ENCODE measurements at regions of chr18 and their contacts with region 1.

Region 1: GRCh38 chr18:3129053-3129864 is 90.5 kb downstream of the MYOM1 start:
- DNase-seq: peak; percentile 71 to 78 (median 76)
- H3K4me3 ChIP-seq: no peak overlapping the region
- H3K4me3 Mint-ChIP-seq: peak overlapping the region in 2 of 8 donors; percentile 35 to 57
- H3K27ac ChIP-seq: no peak overlapping the region
- H3K27ac Mint-ChIP-seq: peak overlapping the region in 5 of 7 donors; percentile 0 to 64 (median 32)
- H3K4me1 ChIP-seq: peaks cover 7% of the 10 kb centered on the region
- H3K4me1 Mint-ChIP-seq: peaks cover 4 to 11% (median 9%) of the 10 kb centered on the region in 4 donors
- H3K27me3 ChIP-seq: no peaks in the 10 kb centered on the region
- H3K27me3 Mint-ChIP-seq: no peaks in the 10 kb centered on the region

Region 2: DNA sequence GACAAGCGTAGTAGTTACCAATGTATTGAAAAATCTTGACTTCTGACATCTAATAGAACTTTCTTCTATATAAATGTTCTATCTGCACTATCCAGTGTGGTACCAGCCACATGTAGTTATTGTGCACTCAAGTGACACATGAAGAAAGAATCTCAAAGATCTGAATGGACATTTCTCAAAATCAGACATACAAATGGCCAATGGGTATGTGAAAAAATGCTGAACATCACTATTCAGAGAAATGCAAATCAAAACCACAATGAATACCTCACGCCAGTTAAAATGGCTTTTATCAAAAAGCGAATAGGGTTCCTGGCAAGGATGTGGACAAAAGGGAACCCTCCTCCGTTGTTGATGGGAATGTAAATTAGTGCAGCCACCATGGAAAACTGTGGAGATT is 511.2 kb before region 1 on chr18:
- CTCF ChIA-PET with region 1: no interaction called
- POLR2A ChIA-PET with region 1: no interaction called
- intact Hi-C with region 1: no loop called
- DNase-seq: no peak
- H3K4me3 ChIP-seq: no peak overlapping the region
- H3K4me3 Mint-ChIP-seq: no peak overlapping the region
- H3K27ac ChIP-seq: no peak overlapping the region
- H3K27ac Mint-ChIP-seq: no peak overlapping the region
- H3K4me1 ChIP-seq: no peaks in the 10 kb centered on the region
- H3K4me1 Mint-ChIP-seq: peaks cover 0 to 4% (median under 1%) of the 10 kb centered on the region in 4 donors
- H3K27me3 ChIP-seq: no peaks in the 10 kb centered on the region
- H3K27me3 Mint-ChIP-seq: no peaks in the 10 kb centered on the region

Region 3: DNA sequence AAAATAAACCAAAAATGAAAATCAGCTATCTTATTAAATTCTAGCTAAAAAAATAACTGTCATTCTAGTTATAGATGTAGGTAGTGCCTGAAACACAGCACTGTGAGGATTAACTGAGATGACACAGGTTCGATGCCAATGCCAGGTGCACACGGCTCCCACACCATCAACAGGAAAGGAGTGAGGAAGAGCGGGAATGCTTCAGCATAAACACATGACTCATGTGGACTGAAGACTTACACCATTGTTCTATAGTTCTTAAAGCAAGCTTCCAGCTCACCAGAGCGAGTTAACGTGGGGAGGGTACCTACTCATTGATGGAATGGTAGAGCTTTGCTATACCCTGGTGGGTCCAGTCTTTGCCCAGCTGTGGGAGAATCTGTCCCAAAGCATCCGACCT is 205.8 kb before region 1 on chr18:
- CTCF ChIA-PET with region 1: interaction called, 14 read pairs
- POLR2A ChIA-PET with region 1: no interaction called
- intact Hi-C with region 1: no loop called
- DNase-seq: no peak
- H3K4me3 ChIP-seq: no peak overlapping the region
- H3K4me3 Mint-ChIP-seq: no peak overlapping the region
- H3K27ac ChIP-seq: no peak overlapping the region
- H3K27ac Mint-ChIP-seq: peak overlapping the region in 1 of 7 donors; percentile 51
- H3K4me1 ChIP-seq: no peaks in the 10 kb centered on the region
- H3K4me1 Mint-ChIP-seq: peaks cover 0 to 2% (median 0%) of the 10 kb centered on the region in 4 donors
- H3K27me3 ChIP-seq: no peaks in the 10 kb centered on the region
- H3K27me3 Mint-ChIP-seq: no peaks in the 10 kb centered on the region

Region 4: GRCh38 chr18:2985628-2986027 is 143.6 kb before region 1 on chr18:
- CTCF ChIA-PET with region 1: interaction called, 31 read pairs
- POLR2A ChIA-PET with region 1: no interaction called
- intact Hi-C with region 1: no loop called
- DNase-seq: peak; percentile 47 to 71 (median 69)
- H3K4me3 ChIP-seq: no peak overlapping the region
- H3K4me3 Mint-ChIP-seq: peak overlapping the region in 1 of 8 donors; percentile 44
- H3K27ac ChIP-seq: no peak overlapping the region
- H3K27ac Mint-ChIP-seq: peak overlapping the region in 4 of 7 donors; percentile 15 to 90 (median 39)
- H3K4me1 ChIP-seq: peaks cover 51% of the 10 kb centered on the region
- H3K4me1 Mint-ChIP-seq: peaks cover 34 to 78% (median 50%) of the 10 kb centered on the region in 4 donors
- H3K27me3 ChIP-seq: no peaks in the 10 kb centered on the region
- H3K27me3 Mint-ChIP-seq: no peaks in the 10 kb centered on the region

Region 5: GRCh38 chr18:3002732-3003131 is 126.5 kb before region 1 on chr18:
- CTCF ChIA-PET with region 1: interaction called, 291 read pairs
- POLR2A ChIA-PET with region 1: no interaction called
- intact Hi-C with region 1: no loop called
- DNase-seq: no peak
- H3K4me3 ChIP-seq: no peak overlapping the region
- H3K4me3 Mint-ChIP-seq: peak overlapping the region in 3 of 8 donors; percentile 7 to 26 (median 13)
- H3K27ac ChIP-seq: no peak overlapping the region
- H3K27ac Mint-ChIP-seq: peak overlapping the region; percentile 26 to 88 (median 62)
- H3K4me1 ChIP-seq: peaks cover 46% of the 10 kb centered on the region
- H3K4me1 Mint-ChIP-seq: peaks cover 47 to 89% (median 65%) of the 10 kb centered on the region in 4 donors
- H3K27me3 ChIP-seq: no peaks in the 10 kb centered on the region
- H3K27me3 Mint-ChIP-seq: no peaks in the 10 kb centered on the region

Region 6: DNA sequence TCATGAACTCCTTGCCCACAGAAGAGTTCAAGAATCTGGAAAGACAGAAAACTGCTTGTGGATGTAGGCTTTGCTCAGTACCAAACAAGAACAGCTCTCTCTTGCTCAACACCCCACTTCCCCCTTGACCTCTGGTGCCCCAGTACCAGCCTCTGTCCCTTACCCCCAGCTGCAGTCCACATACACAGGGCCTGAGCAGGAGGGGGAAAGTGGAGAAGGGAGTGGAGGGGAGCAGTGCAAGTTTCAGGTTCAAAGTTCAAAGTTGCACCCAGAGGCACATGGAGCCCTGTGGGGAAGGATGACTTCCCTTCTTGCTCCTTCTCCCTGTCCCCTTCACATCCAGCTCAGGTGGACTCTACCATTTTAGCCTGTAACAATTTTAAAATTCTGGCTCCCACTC is 55.2 kb before region 1 on chr18:
- CTCF ChIA-PET with region 1: interaction called, 22 read pairs
- POLR2A ChIA-PET with region 1: no interaction called
- intact Hi-C with region 1: no loop called
- DNase-seq: no peak
- H3K4me3 ChIP-seq: no peak overlapping the region
- H3K4me3 Mint-ChIP-seq: no peak overlapping the region
- H3K27ac ChIP-seq: no peak overlapping the region
- H3K27ac Mint-ChIP-seq: peak overlapping the region in 1 of 7 donors; percentile 22
- H3K4me1 ChIP-seq: peaks cover 9% of the 10 kb centered on the region
- H3K4me1 Mint-ChIP-seq: peaks cover 7 to 11% (median 9%) of the 10 kb centered on the region in 4 donors
- H3K27me3 ChIP-seq: no peaks in the 10 kb centered on the region
- H3K27me3 Mint-ChIP-seq: no peaks in the 10 kb centered on the region

Region 7: GRCh38 chr18:3097082-3097481 is 32.2 kb before region 1 on chr18:
- CTCF ChIA-PET with region 1: interaction called, 22 read pairs
- POLR2A ChIA-PET with region 1: interaction called, 4 read pairs
- intact Hi-C with region 1: no loop called
- DNase-seq: peak; percentile 57 to 78 (median 63)
- H3K4me3 ChIP-seq: no peak overlapping the region
- H3K4me3 Mint-ChIP-seq: peak overlapping the region in 6 of 8 donors; percentile 1 to 47 (median 23)
- H3K27ac ChIP-seq: no peak overlapping the region
- H3K27ac Mint-ChIP-seq: peak overlapping the region in 6 of 7 donors; percentile 18 to 86 (median 67)
- H3K4me1 ChIP-seq: peaks cover 18% of the 10 kb centered on the region
- H3K4me1 Mint-ChIP-seq: peaks cover 12 to 22% (median 18%) of the 10 kb centered on the region in 4 donors
- H3K27me3 ChIP-seq: no peaks in the 10 kb centered on the region
- H3K27me3 Mint-ChIP-seq: no peaks in the 10 kb centered on the region

Region 8: DNA sequence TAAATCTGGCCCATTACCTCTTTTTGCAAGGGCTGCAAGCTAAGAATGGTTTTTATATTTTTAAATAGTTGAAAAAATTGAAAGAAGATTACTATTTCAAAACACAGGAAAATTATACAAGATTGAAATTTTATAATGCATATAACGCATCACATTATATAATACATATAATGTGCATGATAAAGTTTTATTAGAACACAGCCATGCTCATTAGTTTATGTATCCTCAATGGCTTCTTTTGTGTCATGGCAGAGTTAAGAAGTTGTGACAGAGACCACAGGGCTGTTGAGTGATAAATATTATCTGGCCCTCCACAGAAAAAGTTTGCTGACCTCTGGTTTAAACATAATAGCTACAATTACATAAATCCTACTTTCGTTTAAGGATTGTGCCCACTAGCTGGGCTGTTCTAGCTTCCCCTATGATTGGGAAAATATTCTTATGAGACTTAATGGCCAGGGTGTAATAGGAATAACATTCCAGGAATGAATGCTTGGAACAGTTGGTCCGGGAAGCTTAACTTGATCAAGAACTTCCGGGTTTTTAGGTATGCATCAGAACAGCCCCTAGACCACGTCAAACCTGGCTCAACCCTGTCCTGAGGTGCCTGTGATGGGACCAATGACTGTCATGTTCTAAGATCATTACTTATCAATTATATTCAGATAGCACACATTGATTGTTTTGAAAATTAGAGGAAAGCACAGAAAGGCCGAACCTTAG is 17.6 kb before region 1 on chr18:
- CTCF ChIA-PET with region 1: interaction called, 61 read pairs
- POLR2A ChIA-PET with region 1: no interaction called
- intact Hi-C with region 1: no loop called
- DNase-seq: no peak
- H3K4me3 ChIP-seq: no peak overlapping the region
- H3K4me3 Mint-ChIP-seq: no peak overlapping the region
- H3K27ac ChIP-seq: no peak overlapping the region
- H3K27ac Mint-ChIP-seq: no peak overlapping the region
- H3K4me1 ChIP-seq: no peaks in the 10 kb centered on the region
- H3K4me1 Mint-ChIP-seq: no peaks in the 10 kb centered on the region
- H3K27me3 ChIP-seq: no peaks in the 10 kb centered on the region
- H3K27me3 Mint-ChIP-seq: no peaks in the 10 kb centered on the region

Region 9: DNA sequence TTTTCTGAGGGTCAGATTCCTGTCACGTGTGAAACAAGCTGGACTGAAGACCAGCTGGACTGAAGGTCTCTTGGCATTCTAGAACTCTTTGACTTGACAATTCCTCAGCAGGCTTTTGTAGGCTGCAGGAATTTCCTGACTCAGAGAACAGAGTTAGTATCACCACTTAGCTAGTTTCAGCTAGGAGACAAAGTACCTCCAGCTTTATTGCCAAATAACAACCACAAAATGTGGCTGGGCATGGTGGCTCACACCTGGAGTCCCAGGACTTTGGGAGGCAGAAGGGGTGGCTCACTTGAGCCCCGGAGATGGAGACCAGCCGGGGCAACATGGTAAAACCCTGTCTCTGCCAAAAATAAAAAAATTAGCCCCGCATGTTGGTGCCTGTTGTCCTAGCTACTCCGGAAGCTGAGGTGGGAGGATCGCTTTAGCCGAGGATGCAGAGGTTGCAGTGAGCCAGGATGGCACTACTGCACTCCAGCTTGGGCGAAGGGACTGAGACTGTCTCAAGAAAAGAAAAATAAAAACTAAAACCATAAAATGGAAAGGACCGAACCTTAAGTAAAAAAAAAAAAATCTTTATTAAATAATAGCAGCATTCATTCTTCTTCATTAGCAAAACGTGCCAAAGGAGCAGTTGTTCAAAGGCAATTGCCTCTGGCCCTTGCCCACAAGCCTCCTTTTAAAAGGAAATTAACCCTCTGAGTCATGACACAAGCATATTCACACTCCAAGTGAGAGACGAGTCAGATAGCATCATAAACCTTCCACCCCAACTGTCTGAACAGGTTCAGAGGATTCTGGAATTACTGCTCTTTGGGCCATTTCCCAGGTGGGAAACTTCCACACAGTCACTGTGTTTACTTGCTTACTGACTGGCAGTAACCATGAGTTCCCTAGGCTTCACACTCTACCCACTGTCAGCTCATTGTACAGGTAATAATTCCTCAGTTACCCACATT is 221.6 kb after region 1 on chr18:
- CTCF ChIA-PET with region 1: no interaction called
- POLR2A ChIA-PET with region 1: no interaction called
- intact Hi-C with region 1: no loop called
- DNase-seq: no peak
- H3K4me3 ChIP-seq: no peak overlapping the region
- H3K4me3 Mint-ChIP-seq: no peak overlapping the region
- H3K27ac ChIP-seq: no peak overlapping the region
- H3K27ac Mint-ChIP-seq: no peak overlapping the region
- H3K4me1 ChIP-seq: peaks cover 1% of the 10 kb centered on the region
- H3K4me1 Mint-ChIP-seq: peaks cover 0 to 3% (median 2%) of the 10 kb centered on the region in 4 donors
- H3K27me3 ChIP-seq: no peaks in the 10 kb centered on the region
- H3K27me3 Mint-ChIP-seq: peaks cover 3 to 11% of the 10 kb centered on the region in 2 donors

Region 10: DNA sequence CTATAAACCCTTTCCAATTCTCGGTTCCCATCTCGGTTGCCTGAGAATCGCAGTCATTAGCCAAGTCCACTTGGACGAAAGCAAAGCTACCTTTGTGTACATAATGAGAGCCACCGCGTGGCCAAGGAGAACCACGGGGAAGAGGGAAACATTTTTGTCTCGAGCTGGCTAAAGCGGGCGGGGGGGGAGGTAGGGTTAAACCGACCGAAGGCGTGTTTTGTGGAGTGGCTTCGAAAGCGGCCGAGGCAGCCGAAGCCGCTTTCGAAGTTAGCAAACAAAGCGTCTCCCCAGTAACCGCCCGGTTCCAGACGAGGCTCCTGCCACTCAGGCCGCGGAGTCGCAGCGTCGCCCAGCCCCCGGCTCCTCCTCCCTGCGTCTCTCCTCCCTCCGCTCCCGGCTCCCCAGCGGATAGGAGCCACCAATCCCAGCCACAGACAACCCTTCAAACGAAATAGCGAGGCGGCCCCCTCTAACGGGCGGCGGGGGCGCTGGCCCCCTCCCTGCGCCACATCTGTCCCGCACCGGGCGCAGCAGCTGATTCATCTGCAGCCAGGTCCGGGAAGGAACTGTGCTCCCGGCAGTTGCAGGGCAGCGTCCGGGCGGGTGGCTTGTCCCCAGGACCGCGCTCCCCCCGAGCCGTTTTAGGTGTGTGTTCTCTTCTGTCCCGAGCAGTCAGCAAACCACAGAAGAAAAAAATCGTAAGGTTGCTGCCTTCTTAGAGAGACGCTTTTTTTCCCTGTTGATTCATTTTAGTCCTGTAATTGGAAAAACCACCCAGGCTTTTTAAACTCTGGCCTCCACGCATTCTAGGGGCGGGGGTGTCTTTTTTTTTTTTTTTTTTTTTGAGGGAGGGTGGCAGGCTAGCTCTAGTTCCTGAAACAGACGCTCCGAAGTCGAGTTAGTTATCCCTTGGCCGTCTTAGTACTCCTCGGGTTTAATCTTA is 318.9 kb after region 1 on chr18:
- CTCF ChIA-PET with region 1: no interaction called
- POLR2A ChIA-PET with region 1: no interaction called
- intact Hi-C with region 1: no loop called
- DNase-seq: peak; percentile 84 to 91 (median 89)
- H3K4me3 ChIP-seq: peak overlapping the region; percentile 74 to 84
- H3K4me3 Mint-ChIP-seq: peak overlapping the region; percentile 93 to 98 (median 96)
- H3K27ac ChIP-seq: peak overlapping the region; percentile 94
- H3K27ac Mint-ChIP-seq: peak overlapping the region; percentile 99 to 100 (median 100)
- H3K4me1 ChIP-seq: peaks cover 21% of the 10 kb centered on the region
- H3K4me1 Mint-ChIP-seq: peaks cover 9 to 53% (median 22%) of the 10 kb centered on the region in 4 donors
- H3K27me3 ChIP-seq: no peaks in the 10 kb centered on the region
- H3K27me3 Mint-ChIP-seq: peaks cover 0 to 6% of the 10 kb centered on the region in 2 donors

Measured in CD4-positive, alpha-beta memory T cell (primary cell).